ENCODE measurements at regions of chrX and their contacts with region 1.

Region 1: DNA sequence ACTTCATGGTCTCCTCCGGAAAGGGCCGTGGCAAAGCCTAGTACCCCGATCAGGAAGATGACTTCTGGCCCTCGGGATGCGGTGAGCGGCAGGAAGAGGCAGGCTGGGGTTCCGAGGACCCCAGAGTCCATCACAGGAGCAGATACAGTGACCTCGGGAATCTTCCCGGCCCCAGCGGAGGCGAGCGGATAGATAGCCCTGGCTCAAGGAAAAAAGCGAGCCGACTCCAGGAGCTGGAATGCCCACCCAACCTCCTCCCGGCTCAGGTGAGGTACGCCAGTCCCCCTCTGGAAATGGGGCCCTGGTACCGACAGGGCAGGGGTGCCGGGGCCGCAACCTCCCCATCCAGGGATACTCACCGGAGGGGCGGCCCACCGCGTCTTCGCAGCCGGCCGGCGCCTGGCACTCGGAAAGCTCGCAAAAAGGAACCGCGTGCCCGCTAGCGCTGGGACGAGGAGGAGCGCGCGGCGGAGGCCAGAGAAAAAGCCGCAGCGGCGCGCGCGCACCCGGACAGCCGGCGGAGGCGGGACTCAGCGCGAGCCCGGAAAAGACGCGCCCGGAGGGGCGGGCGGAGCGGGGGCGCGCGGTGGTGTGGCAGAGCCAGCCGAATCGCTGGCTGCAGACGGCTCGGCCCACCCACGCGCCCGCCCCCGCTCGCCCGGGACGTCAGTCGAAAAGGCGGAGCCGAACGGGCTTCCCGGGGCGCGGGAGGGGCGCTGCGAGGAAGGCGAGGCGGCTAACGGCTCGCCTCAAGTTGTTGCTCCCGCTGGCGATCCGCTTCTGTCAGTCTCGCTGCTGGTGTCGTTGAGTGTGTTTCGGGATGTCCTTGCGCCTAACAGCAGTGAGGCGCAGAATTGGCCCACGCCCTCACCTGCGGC is at the start of gene ACSL4:
- DNase-seq: peak; percentile 86
- H3K4me3 Mint-ChIP-seq: peak within 1 kb of the TSS; percentile 93
- H3K27ac Mint-ChIP-seq: peak within 1 kb of the TSS; percentile 96
- H3K4me1 Mint-ChIP-seq: peaks cover 29% of the 10 kb centered on the region
- H3K27me3 Mint-ChIP-seq: no peaks in the 10 kb centered on the region
- total RNA-seq, gene ACSL4: 58.5 to 58.8 TPM

Region 2: GRCh38 chrX:108091266-108091877 is 1641.6 kb before region 1 on chrX and contains the starts of genes ATG4A and PSMD10:
- CTCF ChIA-PET with region 1: no interaction called
- intact Hi-C with region 1: loop called (anchors 5 kb)
- DNase-seq: peak; percentile 94
- H3K4me3 Mint-ChIP-seq: no peak within 1 kb of the TSS
- H3K27ac Mint-ChIP-seq: no peak within 1 kb of the TSS
- H3K4me1 Mint-ChIP-seq: peaks cover 19% of the 10 kb centered on the region
- H3K27me3 Mint-ChIP-seq: no peaks in the 10 kb centered on the region
- total RNA-seq, gene ATG4A: 8.2 to 8.6 TPM
- total RNA-seq, gene PSMD10: 54.6 to 58.8 TPM

Region 3: GRCh38 chrX:109536439-109537336 is 196.3 kb before region 1 on chrX and contains the start of gene NXT2:
- CTCF ChIA-PET with region 1: no interaction called
- intact Hi-C with region 1: loop called (anchors 1 kb)
- DNase-seq: peak; percentile 89
- H3K4me3 Mint-ChIP-seq: peak within 1 kb of the TSS; percentile 95
- H3K27ac Mint-ChIP-seq: peak within 1 kb of the TSS; percentile 98
- H3K4me1 Mint-ChIP-seq: peaks cover 19% of the 10 kb centered on the region
- H3K27me3 Mint-ChIP-seq: no peaks in the 10 kb centered on the region
- total RNA-seq, gene NXT2: 14.8 to 14.9 TPM

Region 4: DNA sequence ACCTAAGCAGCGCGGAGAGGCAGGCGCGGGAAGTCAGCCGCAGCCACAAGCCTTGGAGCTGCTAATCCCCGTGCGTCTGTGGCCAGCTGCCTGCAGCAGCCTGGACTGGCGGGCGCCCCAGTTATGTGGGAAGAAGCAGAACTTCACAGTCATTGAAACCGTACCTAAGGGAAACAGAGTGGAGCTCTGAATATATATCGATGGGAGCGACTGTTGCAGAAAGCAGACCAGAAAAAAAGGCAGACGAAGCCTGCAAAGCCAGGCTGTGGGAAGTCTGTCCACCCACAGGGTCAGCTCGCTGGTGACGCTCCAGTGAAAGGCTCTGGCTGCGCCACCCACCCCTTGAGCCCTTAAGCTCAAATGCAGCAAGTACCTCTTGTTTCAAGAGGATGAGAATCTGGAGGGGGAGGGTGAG is 132.8 kb before region 1 on chrX:
- CTCF ChIA-PET with region 1: no interaction called
- intact Hi-C with region 1: no loop called
- DNase-seq: no peak
- H3K4me3 Mint-ChIP-seq: no peak overlapping the region
- H3K27ac Mint-ChIP-seq: no peak overlapping the region
- H3K4me1 Mint-ChIP-seq: no peaks in the 10 kb centered on the region
- H3K27me3 Mint-ChIP-seq: peaks cover 19% of the 10 kb centered on the region

Region 5: DNA sequence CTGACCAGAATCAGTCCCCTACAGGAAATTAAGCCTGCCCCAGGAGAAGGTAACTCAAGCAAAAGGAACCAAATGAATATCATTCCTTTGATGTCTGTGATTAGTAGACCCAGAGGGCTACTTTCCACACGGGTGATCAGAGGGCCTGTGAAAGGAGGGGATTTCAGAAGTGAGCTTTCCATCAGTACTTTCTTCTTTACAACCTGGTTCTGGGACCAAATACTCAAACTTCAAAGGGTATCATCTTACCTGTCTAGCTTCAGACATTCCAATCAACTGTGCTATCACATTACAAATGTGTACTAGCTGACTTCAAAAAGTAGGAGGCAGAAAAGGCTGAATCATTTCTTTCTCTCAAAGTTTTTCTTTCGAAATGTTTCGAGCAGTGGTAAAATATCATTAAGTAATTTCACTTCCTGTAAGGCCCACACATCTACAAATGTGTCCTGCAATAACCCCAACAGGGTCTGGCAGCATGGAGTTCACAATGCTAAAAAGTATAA is 23.8 kb before region 1 on chrX:
- CTCF ChIA-PET with region 1: interaction called, 5 read pairs
- intact Hi-C with region 1: loop called (anchors 1 kb)
- DNase-seq: peak; percentile 10
- H3K4me3 Mint-ChIP-seq: no peak overlapping the region
- H3K27ac Mint-ChIP-seq: peak overlapping the region; percentile 71
- H3K4me1 Mint-ChIP-seq: peaks cover 75% of the 10 kb centered on the region
- H3K27me3 Mint-ChIP-seq: no peaks in the 10 kb centered on the region

Region 6: GRCh38 chrX:109760241-109760922 is 27.4 kb after region 1 on chrX:
- CTCF ChIA-PET with region 1: no interaction called
- intact Hi-C with region 1: no loop called
- DNase-seq: no peak
- H3K4me3 Mint-ChIP-seq: no peak overlapping the region
- H3K27ac Mint-ChIP-seq: no peak overlapping the region
- H3K4me1 Mint-ChIP-seq: peaks cover 3% of the 10 kb centered on the region
- H3K27me3 Mint-ChIP-seq: peaks cover 2% of the 10 kb centered on the region

Region 7: DNA sequence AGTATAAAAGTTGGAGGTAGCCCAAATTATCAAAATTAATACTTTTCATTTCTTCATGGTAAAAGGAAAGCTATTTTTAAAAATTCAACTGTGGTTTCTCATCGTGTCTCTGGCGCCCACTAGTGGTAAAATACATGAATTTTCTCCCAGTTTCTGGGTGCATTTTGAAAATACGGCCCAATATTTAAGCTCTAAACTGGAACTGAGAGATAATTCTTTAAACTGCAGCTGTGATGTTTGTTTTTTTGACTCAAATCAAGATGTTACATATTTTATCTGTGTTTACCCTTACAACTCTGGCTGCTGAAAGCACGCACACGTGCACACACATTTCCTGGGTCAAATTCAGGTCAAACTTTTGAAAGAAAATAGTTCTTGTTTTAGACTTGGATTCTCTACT is 124.0 kb after region 1 on chrX:
- CTCF ChIA-PET with region 1: interaction called, 5 read pairs
- intact Hi-C with region 1: loop called (anchors 5 kb)
- DNase-seq: peak; percentile 15
- H3K4me3 Mint-ChIP-seq: no peak overlapping the region
- H3K27ac Mint-ChIP-seq: no peak overlapping the region
- H3K4me1 Mint-ChIP-seq: no peaks in the 10 kb centered on the region
- H3K27me3 Mint-ChIP-seq: no peaks in the 10 kb centered on the region

Region 8: GRCh38 chrX:110317820-110318658 is 585.0 kb after region 1 on chrX and contains the start of gene AMMECR1:
- CTCF ChIA-PET with region 1: no interaction called
- intact Hi-C with region 1: loop called (anchors 1 kb)
- DNase-seq: peak; percentile 79
- H3K4me3 Mint-ChIP-seq: peak within 1 kb of the TSS; percentile 91
- H3K27ac Mint-ChIP-seq: peak within 1 kb of the TSS; percentile 94
- H3K4me1 Mint-ChIP-seq: peaks cover 21% of the 10 kb centered on the region
- H3K27me3 Mint-ChIP-seq: no peaks in the 10 kb centered on the region
- total RNA-seq, gene AMMECR1: 3.7 to 4.1 TPM